ENCODE measurements at regions of chr3 and their contacts with region 1.

Region 1: DNA sequence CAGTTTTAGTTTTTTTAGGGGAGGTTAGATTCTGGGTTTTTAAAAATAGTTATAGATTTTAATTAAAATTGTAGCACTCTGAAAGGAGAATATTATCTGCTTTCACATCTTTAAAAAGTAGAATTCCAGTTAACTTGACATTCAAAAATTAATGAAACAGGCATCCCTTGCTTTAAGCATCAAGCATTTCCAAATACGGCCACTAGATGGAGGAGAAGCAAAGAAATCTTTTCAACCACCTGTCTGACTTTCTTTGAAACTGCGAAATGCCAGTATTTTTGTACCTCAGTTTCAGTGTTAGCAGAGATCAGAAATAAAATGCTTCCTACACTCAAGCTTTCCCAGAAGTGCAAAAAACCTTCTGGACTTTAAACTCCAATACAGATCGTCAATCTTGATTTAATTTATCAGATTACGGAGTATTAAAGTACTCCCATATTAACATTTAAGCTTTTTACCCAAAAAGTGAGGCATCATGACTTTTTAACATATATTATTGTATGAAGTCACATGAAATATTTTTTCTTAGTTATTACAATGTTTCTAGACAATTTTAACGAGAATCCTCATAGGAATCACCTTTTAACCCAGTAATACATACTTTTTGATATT is 153.3 kb downstream of the P3H2 start:
- DNase-seq: no peak
- ATAC-seq: no peak

Region 2: DNA sequence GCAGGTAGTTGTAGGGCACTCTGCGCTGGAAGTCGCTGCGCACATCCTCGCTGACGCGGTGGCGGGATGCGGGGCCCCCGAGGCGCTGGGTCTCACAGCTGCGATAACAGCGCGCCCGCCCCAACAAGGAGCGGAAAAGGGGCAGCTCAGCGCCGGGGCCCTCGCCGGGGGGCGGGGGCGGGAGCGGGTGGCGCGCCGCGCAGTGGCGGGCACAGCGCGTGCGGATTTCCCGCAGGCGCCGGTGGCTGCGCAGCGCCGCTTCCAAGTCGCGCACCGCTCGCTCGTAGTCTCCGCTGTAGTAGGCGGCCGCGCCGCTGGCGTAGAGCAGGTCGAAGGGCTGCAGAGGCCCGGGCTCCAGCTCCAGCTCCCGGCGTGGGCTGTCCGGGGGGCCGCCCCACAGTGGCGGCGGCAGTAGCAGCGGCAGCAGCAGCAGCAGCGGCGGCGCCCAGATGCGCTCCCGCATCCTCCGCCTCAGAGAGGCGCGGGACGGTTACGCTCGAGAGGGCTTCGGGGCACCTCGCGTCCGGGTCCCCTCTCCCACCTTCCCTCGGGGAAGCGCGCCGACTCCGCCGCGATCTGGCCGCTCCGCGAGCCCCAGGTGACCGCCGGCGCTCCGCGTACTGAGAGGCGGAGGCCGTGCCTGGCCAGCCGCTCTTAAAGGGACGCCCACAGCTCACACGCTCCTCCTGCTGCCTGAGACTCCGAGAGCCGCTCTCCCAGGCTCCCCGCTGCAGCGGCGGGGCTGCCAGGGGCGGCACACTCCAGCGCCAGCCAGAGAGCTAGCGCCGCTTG is 153.1 kb after region 1 on chr3 and contains the start of gene P3H2:
- intact Hi-C with region 1: loop called (anchors 5 kb)
- DNase-seq: peak; percentile 87
- ATAC-seq: peak; percentile 99
- total RNA-seq, gene P3H2: 1.3 TPM

Region 3: GRCh38 chr3:190205739-190206138 is 238.4 kb after region 1 on chr3:
- intact Hi-C with region 1: loop called (anchors 2 kb)
- DNase-seq: no peak
- ATAC-seq: no peak

Region 4: GRCh38 chr3:190265796-190266195 is 298.4 kb after region 1 on chr3:
- intact Hi-C with region 1: no loop called
- DNase-seq: no peak
- ATAC-seq: no peak

Region 5: GRCh38 chr3:190384241-190384863 is 417.0 kb after region 1 on chr3:
- intact Hi-C with region 1: loop called (anchors 5 kb)
- DNase-seq: no peak
- ATAC-seq: peak; percentile 88

Measured in Right ventricle myocardium inferior (tissue), 1 donor.